Activated CD4-positive, alpha-beta T cell treated with anti-CD3 and anti-CD28 coated beads for 36 hours (primary cell): ENCODE measurements at regions of chr6 and their contacts with region 1.

Region 1: GRCh38 chr6:111087106-111087835 is at the start of gene SLC16A10:
- DNase-seq: peak; percentile 87
- ATAC-seq: peak; percentile 90
- H3K4me3 Mint-ChIP-seq: peak within 1 kb of the TSS; percentile 91
- H3K27ac Mint-ChIP-seq: peak within 1 kb of the TSS; percentile 90
- H3K4me1 Mint-ChIP-seq: peaks cover 37% of the 10 kb centered on the region
- H3K27me3 Mint-ChIP-seq: no peaks in the 10 kb centered on the region
- total RNA-seq, gene SLC16A10: 6.2 to 7.0 TPM

Region 2: GRCh38 chr6:110981202-110981600 is 106.1 kb before region 1 on chr6:
- CTCF ChIA-PET with region 1: no interaction called
- POLR2A ChIA-PET with region 1: interaction called, 4 read pairs
- intact Hi-C with region 1: loop called in 1 of 2 experiments (anchors 1 kb)
- DNase-seq: no peak
- ATAC-seq: no peak
- H3K4me3 Mint-ChIP-seq: peak overlapping the region; percentile 99
- H3K27ac Mint-ChIP-seq: peak overlapping the region; percentile 97
- H3K4me1 Mint-ChIP-seq: peaks cover 31% of the 10 kb centered on the region
- H3K27me3 Mint-ChIP-seq: no peaks in the 10 kb centered on the region

Region 3: GRCh38 chr6:111122458-111123286 is 35.4 kb after region 1 on chr6:
- CTCF ChIA-PET with region 1: no interaction called
- POLR2A ChIA-PET with region 1: no interaction called
- intact Hi-C with region 1: loop called in 1 of 2 experiments (anchors 5 kb)
- DNase-seq: no peak
- ATAC-seq: peak; percentile 53
- H3K4me3 Mint-ChIP-seq: no peak overlapping the region
- H3K27ac Mint-ChIP-seq: peak overlapping the region; percentile 5
- H3K4me1 Mint-ChIP-seq: peaks cover 19% of the 10 kb centered on the region
- H3K27me3 Mint-ChIP-seq: no peaks in the 10 kb centered on the region

Region 4: DNA sequence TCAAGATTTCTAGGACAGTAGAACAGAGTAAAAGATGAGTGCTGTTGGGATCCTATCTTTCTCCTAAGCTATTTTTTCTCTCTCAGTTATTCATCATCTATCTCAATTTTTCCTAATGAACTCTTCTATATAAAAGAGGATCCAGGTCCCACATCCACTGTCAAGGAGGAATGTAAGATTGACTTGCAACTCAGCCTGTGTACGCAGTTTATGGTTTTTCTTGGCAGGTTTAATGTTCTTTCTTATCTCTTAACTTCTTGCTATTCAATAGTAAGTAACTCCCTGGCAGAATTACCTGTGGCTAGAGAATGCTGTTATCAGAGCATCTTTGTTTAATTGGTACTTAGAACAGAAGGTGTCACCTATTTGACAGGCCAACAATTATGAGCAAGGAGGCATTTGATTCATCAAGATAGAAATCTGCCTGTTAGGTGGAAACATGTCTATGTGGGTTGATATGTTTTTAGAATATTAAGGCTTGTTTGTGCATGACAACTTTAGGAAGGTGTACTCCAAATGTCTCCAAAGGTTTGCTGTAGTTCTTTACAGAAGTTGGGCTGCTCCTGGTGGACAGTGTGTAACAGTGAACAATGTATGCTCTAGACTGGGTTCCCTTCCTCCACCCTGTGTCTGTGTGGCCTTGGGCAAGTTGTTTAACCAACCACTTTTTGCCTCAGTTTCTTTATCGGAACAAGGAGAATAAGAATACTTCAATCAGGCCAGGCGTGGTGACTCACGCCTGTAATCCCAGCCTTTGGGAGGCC is 61.0 kb after region 1 on chr6:
- CTCF ChIA-PET with region 1: no interaction called
- POLR2A ChIA-PET with region 1: no interaction called
- intact Hi-C with region 1: no loop called
- DNase-seq: no peak
- ATAC-seq: no peak
- H3K4me3 Mint-ChIP-seq: no peak overlapping the region
- H3K27ac Mint-ChIP-seq: no peak overlapping the region
- H3K4me1 Mint-ChIP-seq: peaks cover 3% of the 10 kb centered on the region
- H3K27me3 Mint-ChIP-seq: no peaks in the 10 kb centered on the region

Region 5: DNA sequence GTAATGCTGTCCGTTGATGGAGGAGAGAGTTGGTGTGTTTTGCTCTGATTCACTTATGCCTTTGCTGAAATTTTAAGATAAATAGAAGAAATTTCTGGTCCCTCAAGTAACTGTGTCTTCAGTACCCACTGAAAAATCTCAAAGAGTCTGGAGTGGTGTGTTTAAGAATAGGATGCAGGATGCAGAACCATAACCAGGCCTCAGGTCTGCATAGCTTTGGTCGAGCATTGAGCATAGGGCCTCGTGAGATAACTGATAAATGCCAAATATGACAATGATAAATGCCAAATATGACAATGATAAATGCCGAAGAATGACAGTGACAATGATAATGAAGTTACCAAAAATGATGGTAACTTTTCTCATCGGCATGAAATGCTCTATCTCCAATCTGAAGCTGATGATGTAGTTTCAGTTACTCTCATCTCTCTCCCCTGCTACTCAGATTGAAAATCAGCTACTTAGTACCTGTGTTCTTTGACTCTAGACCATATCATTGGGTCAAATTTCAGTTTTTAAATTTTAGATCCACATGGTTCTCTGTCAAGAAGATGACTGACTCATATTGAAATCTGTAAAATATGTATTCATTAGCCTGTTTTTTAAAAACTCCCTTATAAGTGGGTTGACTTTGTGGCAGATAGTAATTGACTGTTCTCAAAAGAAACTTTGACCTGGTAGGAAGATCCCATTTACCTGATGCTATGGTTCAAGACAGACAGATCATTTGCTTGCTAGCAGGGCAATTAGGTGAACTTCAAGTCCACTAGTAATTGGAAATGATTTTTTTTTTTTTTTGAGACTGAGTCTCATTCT is 96.6 kb after region 1 on chr6:
- CTCF ChIA-PET with region 1: no interaction called
- POLR2A ChIA-PET with region 1: no interaction called
- intact Hi-C with region 1: loop called in 1 of 2 experiments (anchors 5 kb)
- DNase-seq: no peak
- ATAC-seq: peak; percentile 95
- H3K4me3 Mint-ChIP-seq: no peak overlapping the region
- H3K27ac Mint-ChIP-seq: no peak overlapping the region
- H3K4me1 Mint-ChIP-seq: peaks cover 10% of the 10 kb centered on the region
- H3K27me3 Mint-ChIP-seq: no peaks in the 10 kb centered on the region

Region 6: GRCh38 chr6:111873178-111874024 is 786.1 kb after region 1 on chr6 and contains the start of gene FYN:
- CTCF ChIA-PET with region 1: no interaction called
- POLR2A ChIA-PET with region 1: no interaction called
- intact Hi-C with region 1: loop called in 1 of 2 experiments (anchors 1 kb)
- DNase-seq: peak; percentile 100
- ATAC-seq: peak; percentile 87
- H3K4me3 Mint-ChIP-seq: peak within 1 kb of the TSS; percentile 98
- H3K27ac Mint-ChIP-seq: peak within 1 kb of the TSS; percentile 91
- H3K4me1 Mint-ChIP-seq: peaks cover 35% of the 10 kb centered on the region
- H3K27me3 Mint-ChIP-seq: no peaks in the 10 kb centered on the region
- total RNA-seq, gene FYN: 345 to 504 TPM